Tibial artery (tissue), 4 donors: ENCODE measurements at regions of chr11 and their contacts with region 1.

Region 1: GRCh38 chr11:86906198-86906597 is 49.0 kb downstream of the FZD4 start:
- DNase-seq: no peak
- H3K4me3 ChIP-seq: no peak overlapping the region
- H3K27ac ChIP-seq: no peak overlapping the region
- H3K4me1 ChIP-seq: no peaks in the 10 kb centered on the region
- H3K27me3 ChIP-seq: no peaks in the 10 kb centered on the region
- CTCF ChIP-seq: no peak

Region 2: DNA sequence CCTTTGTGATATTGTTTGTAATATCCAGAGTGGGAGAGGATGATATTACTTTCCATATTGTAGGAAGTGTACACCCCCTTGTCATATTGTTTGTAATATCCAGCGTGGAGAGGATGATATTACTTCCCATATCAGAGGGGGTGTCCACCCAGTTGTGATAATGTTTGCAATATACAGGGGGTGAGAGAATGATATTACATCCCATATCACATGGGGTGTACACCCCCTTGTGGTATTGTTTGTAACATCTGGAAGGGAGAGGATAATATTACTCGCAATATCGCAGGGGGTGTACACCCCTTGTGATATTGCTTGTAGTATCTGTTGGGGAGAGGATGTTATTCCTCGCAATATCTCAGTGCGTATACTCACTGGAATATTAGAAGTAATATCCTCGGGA is 44.4 kb before region 1 on chr11:
- intact Hi-C with region 1: loop called (anchors 2 kb)
- DNase-seq: no peak
- H3K4me3 ChIP-seq: no peak overlapping the region
- H3K27ac ChIP-seq: no peak overlapping the region
- H3K4me1 ChIP-seq: no peaks in the 10 kb centered on the region
- H3K27me3 ChIP-seq: no peaks in the 10 kb centered on the region
- CTCF ChIP-seq: no peak